OCI-LY7 (cell line): ENCODE measurements at regions of chr10 and their contacts with region 1.

Region 1: GRCh38 chr10:3623746-3624145 is 161.3 kb downstream of the KLF6 start:
- DNase-seq: peak; percentile 92
- H3K4me3 ChIP-seq: peak overlapping the region; percentile 57
- H3K27ac ChIP-seq: peak overlapping the region; percentile 94
- H3K4me1 ChIP-seq: peaks cover 69% of the 10 kb centered on the region
- CTCF ChIP-seq: no peak

Region 2: GRCh38 chr10:3570855-3571266 is 52.9 kb before region 1 on chr10:
- CTCF ChIA-PET with region 1: no interaction called
- POLR2A ChIA-PET with region 1: no interaction called
- intact Hi-C with region 1: no loop called
- DNase-seq: no peak
- H3K4me3 ChIP-seq: no peak overlapping the region
- H3K27ac ChIP-seq: no peak overlapping the region
- H3K4me1 ChIP-seq: no peaks in the 10 kb centered on the region
- CTCF ChIP-seq: no peak

Region 3: DNA sequence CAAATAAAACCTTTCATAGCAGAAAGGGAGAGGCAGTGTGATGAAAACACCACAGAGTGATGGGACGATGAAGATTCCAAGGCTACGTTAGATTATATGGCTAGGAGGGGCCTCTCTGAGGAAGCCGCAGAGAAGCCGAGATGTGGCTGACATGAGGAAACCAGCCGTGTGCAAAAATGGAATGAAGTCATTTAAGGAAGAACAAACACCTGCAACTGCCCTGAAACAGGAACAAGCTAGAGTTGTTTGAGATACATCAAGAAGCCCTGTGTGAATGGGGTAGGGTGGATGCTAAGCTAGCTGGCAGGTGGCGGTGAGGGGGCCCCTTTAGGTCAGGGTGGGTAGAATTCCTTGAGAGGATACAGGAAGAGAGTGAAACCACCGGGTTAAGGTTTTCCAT is 31.8 kb after region 1 on chr10:
- CTCF ChIA-PET with region 1: no interaction called
- POLR2A ChIA-PET with region 1: interaction called, 14 read pairs
- intact Hi-C with region 1: loop called (anchors 1 kb)
- DNase-seq: peak; percentile 90
- H3K4me3 ChIP-seq: peak overlapping the region; percentile 52
- H3K27ac ChIP-seq: peak overlapping the region; percentile 58
- H3K4me1 ChIP-seq: peaks cover 29% of the 10 kb centered on the region
- CTCF ChIP-seq: no peak

Region 4: GRCh38 chr10:3785257-3785850 is 161.6 kb after region 1 on chr10:
- CTCF ChIA-PET with region 1: no interaction called
- POLR2A ChIA-PET with region 1: interaction called, 16 read pairs
- intact Hi-C with region 1: loop called (anchors 1 kb)
- DNase-seq: peak; percentile 99
- H3K4me3 ChIP-seq: peak overlapping the region; percentile 94
- H3K27ac ChIP-seq: peak overlapping the region; percentile 81
- H3K4me1 ChIP-seq: peaks cover 26% of the 10 kb centered on the region
- CTCF ChIP-seq: no peak

Region 5: DNA sequence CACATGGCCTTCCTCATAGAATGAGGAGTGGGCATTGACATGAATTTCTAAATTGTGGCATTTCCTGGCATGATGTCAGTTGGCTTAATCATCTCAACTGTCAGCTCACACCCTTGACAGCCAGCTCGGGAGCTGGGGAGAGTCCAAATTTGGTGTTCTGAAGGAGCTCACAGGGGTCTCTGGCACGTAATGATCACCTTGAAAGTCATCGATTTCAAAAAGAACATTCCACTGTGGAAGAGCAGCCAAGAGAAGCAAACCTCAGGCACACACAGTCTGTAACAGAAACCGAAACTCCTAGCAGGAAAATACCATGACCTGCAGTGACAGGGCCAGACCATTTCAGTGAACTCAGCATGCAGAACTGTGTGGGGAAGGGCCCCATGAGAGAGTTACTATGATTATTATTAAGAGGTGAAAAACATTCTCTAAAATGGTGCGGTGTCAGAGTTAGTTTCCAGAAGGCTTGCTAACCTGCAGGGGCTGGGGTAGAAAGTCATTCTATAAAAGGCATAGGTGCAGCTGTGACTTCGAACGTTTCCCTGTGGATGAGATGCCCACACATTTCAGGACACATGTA is 187.6 kb after region 1 on chr10:
- CTCF ChIA-PET with region 1: no interaction called
- POLR2A ChIA-PET with region 1: interaction called, 3 read pairs
- intact Hi-C with region 1: loop called (anchors 2 kb)
- DNase-seq: peak; percentile 66
- H3K4me3 ChIP-seq: peak overlapping the region; percentile 54
- H3K27ac ChIP-seq: peak overlapping the region; percentile 58
- H3K4me1 ChIP-seq: peaks cover 60% of the 10 kb centered on the region
- CTCF ChIP-seq: no peak

Region 6: DNA sequence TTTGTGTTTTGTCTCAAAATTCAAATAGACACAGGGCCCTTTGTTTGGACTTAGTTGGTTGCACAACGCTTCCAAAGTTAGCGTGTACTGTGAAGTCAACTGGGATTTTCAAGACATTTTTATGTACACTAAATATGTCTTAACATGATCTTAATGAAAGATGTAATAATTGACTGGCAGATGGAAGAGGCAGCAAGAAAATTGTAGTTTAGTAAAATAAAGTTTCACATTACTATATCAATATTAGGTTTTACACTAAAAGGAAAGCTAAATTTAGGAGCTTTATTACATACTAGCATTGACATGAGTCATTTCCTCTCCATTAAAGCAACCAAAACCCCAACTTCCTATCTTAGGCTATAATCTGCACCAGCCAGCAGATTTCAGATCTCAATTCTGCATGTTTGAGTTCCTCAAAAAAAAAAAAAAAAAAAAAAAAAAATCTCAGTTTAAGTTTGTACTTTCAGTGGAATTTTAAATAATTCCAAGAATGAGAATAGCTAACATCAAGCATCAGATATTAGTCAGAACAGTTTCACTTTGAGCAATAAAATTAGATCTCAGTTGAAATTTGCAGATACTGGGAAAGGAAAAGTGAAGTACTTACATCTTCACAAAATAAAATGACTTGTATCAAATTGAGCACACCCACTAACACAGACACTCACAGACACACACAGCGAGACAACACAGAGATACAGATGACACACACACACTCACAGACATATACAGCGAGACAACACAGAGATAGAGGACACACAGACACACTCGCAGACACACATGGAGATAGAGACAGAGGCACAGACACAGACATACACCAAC is 507.9 kb after region 1 on chr10:
- CTCF ChIA-PET with region 1: interaction called, 3 read pairs
- POLR2A ChIA-PET with region 1: interaction called, 3 read pairs
- intact Hi-C with region 1: loop called (anchors 2 kb)
- DNase-seq: peak; percentile 63
- H3K4me3 ChIP-seq: peak overlapping the region; percentile 21
- H3K27ac ChIP-seq: no peak overlapping the region
- H3K4me1 ChIP-seq: peaks cover 49% of the 10 kb centered on the region
- CTCF ChIP-seq: no peak